GM10248 (cell line): ENCODE measurements at regions of chr6 and their contacts with region 1.

Region 1: GRCh38 chr6:133916650-133917151 is 27.8 kb downstream of the TCF21 start:
- DNase-seq: peak; percentile 47
- CTCF ChIP-seq: peak; percentile 94

Region 2: DNA sequence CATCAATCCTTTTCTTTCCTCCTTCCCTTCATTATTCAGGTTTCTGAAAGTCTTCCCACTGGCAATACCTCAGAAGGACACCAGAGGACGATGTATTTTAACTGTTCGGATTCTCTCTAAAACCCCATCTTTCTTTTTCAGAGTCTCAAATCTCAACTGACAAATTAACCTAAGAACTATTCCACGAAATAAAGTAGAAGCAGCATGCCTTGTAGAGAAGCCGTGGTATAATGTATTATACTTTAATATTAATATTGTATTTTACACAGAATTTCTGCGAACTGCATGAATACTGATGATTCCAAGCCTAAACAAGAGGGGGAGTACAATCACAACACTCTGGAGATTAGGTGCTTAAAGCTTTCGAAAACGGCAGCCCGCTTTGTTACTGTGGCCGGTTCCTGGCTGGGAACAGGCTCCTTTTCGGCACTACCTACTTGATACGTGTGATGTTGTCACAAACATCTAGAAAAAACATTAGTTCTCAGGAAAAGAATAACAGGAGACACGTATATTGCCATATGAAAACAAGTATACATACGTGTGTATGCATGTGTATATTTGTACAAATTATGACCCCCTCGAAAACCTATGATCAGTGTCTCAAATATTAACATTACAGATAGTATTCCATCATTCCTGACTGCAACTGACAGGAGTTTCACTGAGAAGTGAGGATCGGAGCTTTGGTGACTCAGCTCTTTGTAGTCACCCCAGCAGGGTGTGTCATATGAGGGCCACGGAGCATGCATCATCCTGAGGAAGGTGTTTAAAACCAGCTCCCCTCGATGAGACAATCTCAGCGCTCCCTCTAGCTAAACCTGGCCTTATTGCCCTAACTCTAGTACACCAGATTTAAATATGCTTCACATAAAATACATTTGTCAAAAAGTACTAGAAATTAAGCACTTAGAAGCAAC is 347.5 kb before region 1 on chr6:
- CTCF ChIA-PET with region 1: interaction called, 26 read pairs
- POLR2A ChIA-PET with region 1: no interaction called
- DNase-seq: peak; percentile 23
- CTCF ChIP-seq: peak; percentile 41

Region 3: DNA sequence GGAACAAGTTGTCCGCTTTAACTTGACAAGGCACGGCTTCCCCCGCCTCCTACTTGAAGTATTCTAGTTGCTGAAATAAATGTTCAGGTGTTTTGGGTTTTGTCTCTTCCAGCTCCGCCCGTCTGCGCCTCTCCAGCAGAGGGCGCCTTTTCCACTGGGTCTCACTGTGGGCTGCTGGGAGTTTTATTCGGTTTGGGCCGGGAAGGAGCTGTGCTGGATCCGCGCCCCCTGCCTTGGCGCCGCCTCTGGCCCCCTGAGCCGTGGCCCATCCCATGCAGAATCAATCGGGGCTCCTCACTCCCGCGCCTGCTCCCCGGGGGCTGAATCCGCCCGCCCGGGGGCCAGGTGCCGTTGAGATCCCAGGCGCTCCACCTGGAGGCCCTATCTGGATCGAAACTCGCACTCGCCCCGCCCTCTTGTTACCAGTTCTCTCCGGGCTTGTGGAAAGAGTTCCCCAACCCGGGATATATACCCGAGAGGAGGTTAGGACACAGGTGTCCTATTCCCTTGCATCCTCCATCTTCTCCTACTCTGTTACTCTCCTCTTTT is 78.8 kb before region 1 on chr6:
- CTCF ChIA-PET with region 1: interaction called, 29 read pairs
- POLR2A ChIA-PET with region 1: no interaction called
- DNase-seq: peak; percentile 58
- CTCF ChIP-seq: peak; percentile 77

Region 4: DNA sequence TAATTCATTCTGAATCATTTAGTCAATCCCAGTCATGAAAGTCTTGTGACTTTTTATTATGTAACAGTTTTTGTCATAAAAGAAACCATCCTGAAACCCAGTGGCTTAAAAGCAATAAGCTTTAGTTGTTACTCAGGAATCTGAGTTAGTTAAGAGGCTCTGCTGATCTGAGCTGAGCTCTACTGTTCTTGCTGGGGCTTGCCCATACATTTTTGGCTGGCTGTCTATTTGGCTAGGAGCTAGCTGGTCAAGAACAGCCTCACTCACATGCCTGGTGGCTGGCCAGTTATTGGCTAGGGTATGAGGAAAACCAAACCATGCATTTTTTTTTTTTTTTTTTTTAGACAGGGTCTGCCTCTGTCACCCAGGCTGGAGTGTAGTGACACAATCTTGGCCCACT is 17.1 kb before region 1 on chr6:
- CTCF ChIA-PET with region 1: interaction called, 22 read pairs
- POLR2A ChIA-PET with region 1: no interaction called
- DNase-seq: no peak
- CTCF ChIP-seq: no peak

Region 5: DNA sequence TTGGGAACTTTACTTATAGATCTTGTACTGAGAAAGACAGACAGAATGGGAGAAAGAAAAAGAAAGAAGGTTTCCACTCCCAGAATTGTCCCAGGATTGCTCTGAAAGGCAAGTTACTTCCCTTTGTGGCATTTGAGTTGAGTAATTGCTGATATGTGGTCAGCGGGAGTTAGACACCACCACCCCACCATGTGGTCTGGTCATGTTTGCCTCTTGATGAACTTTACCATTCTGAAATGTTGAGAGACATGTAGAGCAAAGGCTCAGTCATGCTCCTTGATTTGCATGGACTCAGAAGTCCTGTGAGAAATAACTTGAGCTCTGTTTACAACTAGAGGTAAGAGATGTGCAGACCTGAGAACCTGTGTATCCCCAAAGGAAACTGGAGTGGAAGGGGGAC is 10.7 kb before region 1 on chr6:
- CTCF ChIA-PET with region 1: interaction called, 26 read pairs
- POLR2A ChIA-PET with region 1: no interaction called
- DNase-seq: no peak
- CTCF ChIP-seq: no peak

Region 6: GRCh38 chr6:134041093-134041492 is 124.4 kb after region 1 on chr6:
- CTCF ChIA-PET with region 1: no interaction called
- POLR2A ChIA-PET with region 1: no interaction called
- DNase-seq: no peak
- CTCF ChIP-seq: no peak

Region 7: DNA sequence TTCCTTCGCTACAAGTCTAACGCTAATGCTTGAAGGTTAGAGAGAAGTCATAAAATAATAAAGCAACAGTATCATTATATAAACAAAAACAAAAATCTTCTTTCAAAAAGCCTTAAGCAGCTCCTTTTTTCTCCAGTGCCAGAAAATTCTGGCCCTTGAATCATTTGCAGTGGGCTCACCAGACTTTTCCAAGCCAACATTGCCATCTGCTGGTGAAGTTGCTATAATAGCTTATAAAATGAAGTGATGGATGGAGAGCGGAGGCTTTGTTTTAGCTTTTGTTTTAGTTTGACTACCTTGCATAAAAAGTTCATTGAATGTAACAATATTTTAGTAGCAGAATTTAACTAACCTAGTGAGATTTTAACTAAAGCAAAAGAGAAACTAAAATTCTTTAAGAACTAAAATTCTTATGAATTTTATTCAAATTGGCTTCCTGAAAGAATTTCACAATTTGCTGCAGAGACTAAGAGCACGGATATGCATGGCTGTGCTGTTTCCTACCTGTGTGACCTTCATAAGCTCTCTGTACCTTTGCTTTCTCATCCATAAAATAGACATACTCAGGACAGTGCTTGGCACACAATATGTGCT is 180.5 kb after region 1 on chr6:
- CTCF ChIA-PET with region 1: interaction called, 334 read pairs
- POLR2A ChIA-PET with region 1: no interaction called
- DNase-seq: peak; percentile 62
- CTCF ChIP-seq: peak; percentile 55

Region 8: GRCh38 chr6:134103006-134103405 is 186.3 kb after region 1 on chr6:
- CTCF ChIA-PET with region 1: interaction called, 334 read pairs
- POLR2A ChIA-PET with region 1: no interaction called
- DNase-seq: no peak
- CTCF ChIP-seq: no peak